ENCODE measurements at regions of chr6 and their contacts with region 1.

Region 1: GRCh38 chr6:29737707-29738630 is 14.7 kb downstream of the HLA-F start:
- DNase-seq: peak; percentile 68 to 78 (median 72)
- H3K4me3 ChIP-seq: no peak overlapping the region
- H3K4me3 Mint-ChIP-seq: no peak overlapping the region
- H3K27ac ChIP-seq: no peak overlapping the region
- H3K27ac Mint-ChIP-seq: peak overlapping the region in 1 of 7 donors; percentile 2
- H3K4me1 ChIP-seq: peaks cover 3% of the 10 kb centered on the region
- H3K4me1 Mint-ChIP-seq: peaks cover 5 to 18% (median 8%) of the 10 kb centered on the region in 4 donors
- H3K27me3 ChIP-seq: no peaks in the 10 kb centered on the region
- H3K27me3 Mint-ChIP-seq: no peaks in the 10 kb centered on the region

Region 2: GRCh38 chr6:29705389-29706231 is 32.4 kb before region 1 on chr6:
- CTCF ChIA-PET with region 1: interaction called, 12 read pairs
- POLR2A ChIA-PET with region 1: interaction called, 158 read pairs
- intact Hi-C with region 1: loop called (anchors 1 kb)
- DNase-seq: peak in 2 of 5 donors; percentile 48 to 51
- H3K4me3 ChIP-seq: no peak overlapping the region
- H3K4me3 Mint-ChIP-seq: peak overlapping the region in 4 of 8 donors; percentile 33 to 64 (median 44)
- H3K27ac ChIP-seq: no peak overlapping the region
- H3K27ac Mint-ChIP-seq: peak overlapping the region; percentile 63 to 90 (median 83)
- H3K4me1 ChIP-seq: peaks cover 54% of the 10 kb centered on the region
- H3K4me1 Mint-ChIP-seq: peaks cover 38 to 58% (median 51%) of the 10 kb centered on the region in 4 donors
- H3K27me3 ChIP-seq: no peaks in the 10 kb centered on the region
- H3K27me3 Mint-ChIP-seq: peaks cover 6 to 15% of the 10 kb centered on the region in 2 donors

Region 3: DNA sequence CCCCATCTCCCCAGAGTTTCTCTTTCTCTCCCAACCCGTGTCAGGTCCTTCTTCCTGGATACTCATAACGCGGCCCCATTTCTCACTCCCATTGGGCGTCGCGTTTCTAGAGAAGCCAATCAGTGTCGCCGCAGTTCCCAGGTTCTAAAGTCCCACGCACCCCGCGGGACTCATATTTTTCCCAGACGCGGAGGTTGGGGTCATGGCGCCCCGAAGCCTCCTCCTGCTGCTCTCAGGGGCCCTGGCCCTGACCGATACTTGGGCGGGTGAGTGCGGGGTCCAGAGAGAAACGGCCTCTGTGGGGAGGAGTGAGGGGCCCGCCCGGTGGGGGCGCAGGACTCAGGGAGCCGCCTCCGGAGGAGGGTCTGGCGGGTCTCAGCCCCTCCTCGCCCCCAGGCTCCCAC is 14.7 kb before region 1 on chr6 and contains the start of gene HLA-F:
- CTCF ChIA-PET with region 1: interaction called, 31 read pairs
- POLR2A ChIA-PET with region 1: interaction called, 10 read pairs
- intact Hi-C with region 1: no loop called
- DNase-seq: peak; percentile 88 to 91 (median 90)
- H3K4me3 ChIP-seq: peak within 1 kb of the TSS; percentile 95
- H3K4me3 Mint-ChIP-seq: peak within 1 kb of the TSS; percentile 94 to 98 (median 96)
- H3K27ac ChIP-seq: peak within 1 kb of the TSS; percentile 100
- H3K27ac Mint-ChIP-seq: peak within 1 kb of the TSS; percentile 96 to 99 (median 98)
- H3K4me1 ChIP-seq: peaks cover 59% of the 10 kb centered on the region
- H3K4me1 Mint-ChIP-seq: peaks cover 33 to 76% (median 43%) of the 10 kb centered on the region in 4 donors
- H3K27me3 ChIP-seq: no peaks in the 10 kb centered on the region
- H3K27me3 Mint-ChIP-seq: no peaks in the 10 kb centered on the region
- total RNA-seq, gene HLA-F: 573 to 585 TPM

Region 4: GRCh38 chr6:29757701-29758293 is 19.8 kb after region 1 on chr6:
- CTCF ChIA-PET with region 1: interaction called, 141 read pairs
- POLR2A ChIA-PET with region 1: interaction called, 99 read pairs
- intact Hi-C with region 1: loop called (anchors 1 kb)
- DNase-seq: no peak
- H3K4me3 ChIP-seq: no peak overlapping the region
- H3K4me3 Mint-ChIP-seq: no peak overlapping the region
- H3K27ac ChIP-seq: no peak overlapping the region
- H3K27ac Mint-ChIP-seq: no peak overlapping the region
- H3K4me1 ChIP-seq: no peaks in the 10 kb centered on the region
- H3K4me1 Mint-ChIP-seq: peaks cover 10 to 15% (median 13%) of the 10 kb centered on the region in 4 donors
- H3K27me3 ChIP-seq: no peaks in the 10 kb centered on the region
- H3K27me3 Mint-ChIP-seq: peaks cover 0 to 5% of the 10 kb centered on the region in 2 donors

Region 5: DNA sequence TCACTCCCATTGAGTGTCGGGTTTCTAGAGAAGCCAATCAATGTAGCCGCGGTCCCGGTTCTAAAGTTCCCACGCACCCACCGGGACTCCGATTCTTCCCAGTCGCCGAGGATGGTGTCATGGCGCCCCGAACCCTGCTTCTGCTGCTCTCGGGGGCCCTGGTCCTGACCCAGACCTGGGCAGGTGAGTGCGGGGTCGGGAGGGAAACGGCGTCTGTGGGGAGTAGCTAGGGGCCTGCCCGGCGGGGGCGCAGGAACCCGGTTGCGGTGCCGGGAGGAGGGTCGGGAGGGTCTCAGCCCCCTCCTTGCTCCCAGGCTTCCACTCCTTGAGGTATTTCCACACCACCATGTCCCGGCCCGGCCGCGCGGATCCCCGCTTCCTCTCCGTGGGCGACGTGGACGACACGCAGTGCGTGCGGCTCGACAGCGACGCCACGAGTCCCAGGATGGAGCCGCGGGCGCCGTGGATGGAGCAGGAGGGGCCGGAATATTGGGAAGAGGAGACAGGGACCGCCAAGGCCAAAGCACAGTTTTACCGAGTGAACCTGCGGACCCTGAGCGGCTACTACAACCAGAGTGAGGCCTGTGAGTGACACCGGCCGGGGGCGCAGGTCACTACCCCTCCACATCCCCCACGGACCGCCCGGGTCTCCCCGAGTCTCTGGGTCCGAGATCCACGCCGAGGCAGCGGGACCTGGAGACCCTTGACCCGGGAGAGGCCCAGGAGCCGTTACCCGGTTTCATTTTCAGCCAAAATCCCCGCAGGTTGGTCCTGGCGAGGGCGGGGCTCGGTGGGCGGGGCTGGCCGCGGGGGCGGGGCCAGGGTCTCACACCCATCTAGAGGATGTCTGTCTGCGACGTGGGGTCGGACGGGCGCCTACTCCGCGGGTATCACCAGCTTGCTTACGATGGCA is 54.4 kb after region 1 on chr6:
- CTCF ChIA-PET with region 1: interaction called, 13 read pairs
- POLR2A ChIA-PET with region 1: interaction called, 3 read pairs
- intact Hi-C with region 1: loop called (anchors 1 kb)
- DNase-seq: peak; percentile 66 to 87 (median 69)
- H3K4me3 ChIP-seq: peak overlapping the region; percentile 45 to 79
- H3K4me3 Mint-ChIP-seq: peak overlapping the region; percentile 88 to 94 (median 91)
- H3K27ac ChIP-seq: peak overlapping the region; percentile 74
- H3K27ac Mint-ChIP-seq: peak overlapping the region; percentile 68 to 92 (median 86)
- H3K4me1 ChIP-seq: peaks cover 15% of the 10 kb centered on the region
- H3K4me1 Mint-ChIP-seq: peaks cover 8 to 36% (median 18%) of the 10 kb centered on the region in 4 donors
- H3K27me3 ChIP-seq: no peaks in the 10 kb centered on the region
- H3K27me3 Mint-ChIP-seq: peaks cover 14 to 17% of the 10 kb centered on the region in 2 donors

Region 6: GRCh38 chr6:29834564-29835436 is 96.8 kb after region 1 on chr6:
- CTCF ChIA-PET with region 1: interaction called, 98 read pairs
- POLR2A ChIA-PET with region 1: interaction called, 4 read pairs
- intact Hi-C with region 1: loop called (anchors 1 kb)
- DNase-seq: peak in 4 of 5 donors; percentile 41 to 50 (median 44)
- H3K4me3 ChIP-seq: no peak overlapping the region
- H3K4me3 Mint-ChIP-seq: no peak overlapping the region
- H3K27ac ChIP-seq: no peak overlapping the region
- H3K27ac Mint-ChIP-seq: peak overlapping the region in 1 of 7 donors; percentile 19
- H3K4me1 ChIP-seq: no peaks in the 10 kb centered on the region
- H3K4me1 Mint-ChIP-seq: peaks cover 0 to 5% (median under 1%) of the 10 kb centered on the region in 4 donors
- H3K27me3 ChIP-seq: peaks cover 15% of the 10 kb centered on the region
- H3K27me3 Mint-ChIP-seq: peaks cover 35 to 57% of the 10 kb centered on the region in 2 donors